PC-3 (cell line): ENCODE measurements at regions of chr21 and their contacts with region 1.

Region 1: DNA sequence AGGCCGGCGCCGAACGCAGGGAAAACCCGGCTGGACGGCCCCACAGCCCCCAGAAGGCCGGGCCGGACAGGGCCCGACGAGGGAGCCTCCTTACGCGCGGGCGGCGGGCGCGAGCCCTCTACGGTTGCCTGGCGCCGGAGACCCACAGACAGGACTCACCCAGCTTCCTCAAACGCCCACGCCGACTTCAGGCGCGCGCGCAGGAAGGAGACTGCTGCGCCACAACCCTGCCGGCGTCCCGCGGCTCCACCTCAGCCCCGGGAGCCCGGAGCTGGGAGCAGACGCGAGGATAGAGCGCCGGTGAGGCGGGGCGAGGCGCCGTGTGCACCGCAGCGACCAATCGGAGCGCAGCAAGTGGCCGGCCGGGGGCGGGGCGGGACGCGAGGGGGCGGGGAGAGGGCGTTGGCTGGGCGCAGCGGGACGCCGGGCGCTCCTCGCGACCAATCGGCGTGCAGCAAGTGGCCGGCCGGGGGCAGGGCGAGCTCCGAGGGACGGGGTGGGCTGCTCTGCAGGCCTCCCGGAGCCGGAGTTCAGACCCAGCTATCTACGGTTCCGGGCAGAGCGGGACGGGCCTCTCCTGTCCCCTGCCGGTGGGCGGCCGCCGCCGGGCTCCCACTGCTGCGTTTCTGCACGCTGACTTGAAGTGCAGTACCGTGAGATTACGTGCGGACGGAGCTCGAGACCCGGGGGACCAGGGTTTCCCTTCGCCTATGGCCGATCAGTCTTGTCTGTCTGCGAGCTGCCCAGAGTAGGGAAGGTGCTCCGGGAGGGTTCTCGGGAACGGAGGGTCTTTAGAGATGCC is at the start of gene TMEM50B:
- DNase-seq: peak; percentile 95
- ATAC-seq: peak; percentile 92
- H3K4me3 ChIP-seq: peak within 1 kb of the TSS; percentile 79
- H3K27ac ChIP-seq: peak within 1 kb of the TSS; percentile 67
- H3K4me1 ChIP-seq: no peaks in the 10 kb centered on the region; the same call in 1 of the 2 replicates
- H3K27me3 ChIP-seq: no peaks in the 10 kb centered on the region
- CTCF ChIP-seq: peak; percentile 38; the same call in 1 of the 2 replicates
- total RNA-seq, gene TMEM50B: 21.5 and 25.5 TPM in 2 replicates

Region 2: DNA sequence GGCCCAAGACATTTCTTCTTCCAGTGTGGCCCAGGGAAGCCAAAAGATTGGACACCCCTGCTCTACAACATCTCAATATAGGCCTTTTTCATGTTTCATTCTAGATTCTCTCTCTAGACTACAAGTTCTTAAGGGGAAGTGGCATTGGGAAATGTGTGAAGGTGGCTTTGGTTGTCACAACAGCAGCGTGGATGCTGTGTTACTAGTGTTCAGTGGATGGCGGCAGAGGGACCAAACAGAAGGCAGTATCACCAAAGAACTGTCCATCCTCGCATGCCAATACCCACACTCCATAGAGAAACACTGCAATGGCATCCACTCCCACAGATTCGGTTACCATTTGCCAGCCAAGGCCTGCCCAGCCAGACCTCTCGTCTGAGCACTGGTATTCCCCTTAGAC is 274.4 kb before region 1 on chr21:
- CTCF ChIA-PET with region 1: interaction called, 12 read pairs
- POLR2A ChIA-PET with region 1: interaction called, 4 read pairs
- intact Hi-C with region 1: no loop called
- DNase-seq: no peak
- ATAC-seq: no peak
- H3K4me3 ChIP-seq: no peak overlapping the region
- H3K27ac ChIP-seq: no peak overlapping the region
- H3K4me1 ChIP-seq: peaks cover 25% of the 10 kb centered on the region
- H3K27me3 ChIP-seq: no peaks in the 10 kb centered on the region
- CTCF ChIP-seq: no peak

Region 3: GRCh38 chr21:33419538-33420123 is 60.2 kb before region 1 on chr21:
- CTCF ChIA-PET with region 1: no interaction called
- POLR2A ChIA-PET with region 1: interaction called, 17 read pairs
- intact Hi-C with region 1: no loop called
- DNase-seq: peak; percentile 73
- ATAC-seq: peak; percentile 53
- H3K4me3 ChIP-seq: no peak overlapping the region
- H3K27ac ChIP-seq: peak overlapping the region; percentile 92
- H3K4me1 ChIP-seq: peaks cover 41% of the 10 kb centered on the region
- H3K27me3 ChIP-seq: no peaks in the 10 kb centered on the region
- CTCF ChIP-seq: no peak

Region 4: DNA sequence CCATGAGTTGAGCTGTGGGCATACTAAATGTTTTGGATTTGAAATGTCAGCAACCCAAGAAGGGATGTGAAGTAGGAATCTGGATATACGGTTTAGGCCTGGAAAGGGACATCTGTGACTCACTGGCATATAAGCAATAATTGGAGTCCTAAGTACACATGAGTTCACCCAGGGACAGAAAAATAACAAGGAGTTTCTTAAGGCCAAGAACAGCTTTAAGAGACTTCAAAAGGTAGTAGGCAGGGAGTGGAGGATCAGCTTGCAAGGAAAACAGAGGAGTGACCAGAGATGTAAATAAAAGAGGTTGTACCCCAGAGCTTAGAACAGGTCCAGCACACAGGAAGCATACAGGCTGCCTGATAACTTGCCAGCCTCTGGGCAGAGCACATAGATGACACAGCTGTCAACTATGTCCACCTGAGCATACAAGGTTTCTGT is 28.2 kb before region 1 on chr21:
- CTCF ChIA-PET with region 1: interaction called, 9 read pairs
- POLR2A ChIA-PET with region 1: interaction called, 3 read pairs
- intact Hi-C with region 1: loop called (anchors 1 kb)
- DNase-seq: peak; percentile 93
- ATAC-seq: peak; percentile 96
- H3K4me3 ChIP-seq: peak overlapping the region; percentile 10; the same call in 1 of the 2 replicates
- H3K27ac ChIP-seq: peak overlapping the region; percentile 79
- H3K4me1 ChIP-seq: peaks cover 26% of the 10 kb centered on the region
- H3K27me3 ChIP-seq: no peaks in the 10 kb centered on the region
- CTCF ChIP-seq: no peak

Region 5: DNA sequence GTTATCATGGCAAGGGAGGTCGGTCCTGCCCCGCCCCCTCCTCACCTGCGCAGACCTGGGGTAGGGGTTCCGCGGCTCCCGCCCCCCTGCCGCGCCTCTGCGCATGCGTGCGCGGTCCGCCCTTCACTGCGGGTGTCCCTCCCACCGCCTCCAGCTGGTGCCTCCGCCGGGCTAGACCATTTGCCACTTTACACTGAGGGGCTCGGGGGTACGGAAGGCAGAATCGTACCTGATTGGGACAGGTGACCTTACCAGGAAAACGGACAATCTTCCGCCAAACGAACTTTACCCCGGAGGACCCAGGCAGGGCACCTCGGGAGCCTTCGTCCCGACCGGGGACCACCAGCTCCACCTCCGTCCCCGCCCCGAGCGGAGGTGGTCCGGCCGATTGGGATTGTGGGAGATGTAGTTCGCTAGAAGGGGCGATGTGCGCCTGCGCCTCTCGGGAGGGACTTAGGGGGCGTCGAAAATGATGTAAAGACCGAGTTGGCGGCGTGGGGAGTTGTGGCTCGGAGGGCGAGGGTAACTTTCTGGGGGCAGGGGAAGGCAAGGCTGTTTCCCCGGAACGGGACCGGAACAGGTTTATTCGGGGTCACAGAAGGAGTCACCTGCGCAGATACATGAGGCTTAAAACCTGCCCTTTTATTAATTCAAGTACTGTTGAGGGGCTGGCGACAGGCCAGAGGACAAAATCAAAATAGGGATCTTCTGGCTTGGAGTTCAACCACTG is 11.7 kb after region 1 on chr21 and contains the start of gene DNAJC28:
- CTCF ChIA-PET with region 1: interaction called, 16 read pairs
- POLR2A ChIA-PET with region 1: interaction called, 29 read pairs
- intact Hi-C with region 1: no loop called
- DNase-seq: peak; percentile 95
- ATAC-seq: peak; percentile 96
- H3K4me3 ChIP-seq: peak within 1 kb of the TSS; percentile 82
- H3K27ac ChIP-seq: no peak within 1 kb of the TSS
- H3K4me1 ChIP-seq: no peaks in the 10 kb centered on the region
- H3K27me3 ChIP-seq: no peaks in the 10 kb centered on the region
- CTCF ChIP-seq: no peak
- total RNA-seq, gene DNAJC28: 0.29 and 0.44 TPM in 2 replicates

Region 6: GRCh38 chr21:33588485-33589335 is 108.8 kb after region 1 on chr21 and contains the start of gene DONSON:
- CTCF ChIA-PET with region 1: no interaction called
- POLR2A ChIA-PET with region 1: interaction called, 4 read pairs
- intact Hi-C with region 1: loop called (anchors 2 kb)
- DNase-seq: peak; percentile 87
- ATAC-seq: peak; percentile 85
- H3K4me3 ChIP-seq: peak within 1 kb of the TSS; percentile 98
- H3K27ac ChIP-seq: peak within 1 kb of the TSS; percentile 51
- H3K4me1 ChIP-seq: peaks cover 25% of the 10 kb centered on the region
- H3K27me3 ChIP-seq: no peaks in the 10 kb centered on the region
- CTCF ChIP-seq: no peak
- total RNA-seq, gene DONSON: 29.2 and 41.9 TPM in 2 replicates

Region 7: GRCh38 chr21:33908760-33909159 is 428.9 kb after region 1 on chr21:
- CTCF ChIA-PET with region 1: no interaction called
- POLR2A ChIA-PET with region 1: interaction called, 12 read pairs
- intact Hi-C with region 1: no loop called
- DNase-seq: no peak
- ATAC-seq: no peak
- H3K4me3 ChIP-seq: no peak overlapping the region
- H3K27ac ChIP-seq: no peak overlapping the region
- H3K4me1 ChIP-seq: peaks cover under 1% of the 10 kb centered on the region; the same call in 1 of the 2 replicates
- H3K27me3 ChIP-seq: no peaks in the 10 kb centered on the region
- CTCF ChIP-seq: no peak